Naive thymus-derived CD8-positive, alpha-beta T cell (primary cell): ENCODE measurements at regions of chr19 and their contacts with region 1.

Region 1: GRCh38 chr19:8569066-8569771 is 8.0 kb downstream of the MYO1F start:
- DNase-seq: peak in 7 of 10 donors; percentile 27 to 82 (median 50)
- ATAC-seq: peak; percentile 69 to 82
- H3K4me3 Mint-ChIP-seq: peak overlapping the region; percentile 63 to 89 (median 80)
- H3K27ac Mint-ChIP-seq: peak overlapping the region; percentile 84 to 99 (median 92)
- H3K4me1 Mint-ChIP-seq: peaks cover 28 to 89% (median 68%) of the 10 kb centered on the region in 4 donors
- H3K27me3 Mint-ChIP-seq: no peaks in the 10 kb centered on the region

Region 2: DNA sequence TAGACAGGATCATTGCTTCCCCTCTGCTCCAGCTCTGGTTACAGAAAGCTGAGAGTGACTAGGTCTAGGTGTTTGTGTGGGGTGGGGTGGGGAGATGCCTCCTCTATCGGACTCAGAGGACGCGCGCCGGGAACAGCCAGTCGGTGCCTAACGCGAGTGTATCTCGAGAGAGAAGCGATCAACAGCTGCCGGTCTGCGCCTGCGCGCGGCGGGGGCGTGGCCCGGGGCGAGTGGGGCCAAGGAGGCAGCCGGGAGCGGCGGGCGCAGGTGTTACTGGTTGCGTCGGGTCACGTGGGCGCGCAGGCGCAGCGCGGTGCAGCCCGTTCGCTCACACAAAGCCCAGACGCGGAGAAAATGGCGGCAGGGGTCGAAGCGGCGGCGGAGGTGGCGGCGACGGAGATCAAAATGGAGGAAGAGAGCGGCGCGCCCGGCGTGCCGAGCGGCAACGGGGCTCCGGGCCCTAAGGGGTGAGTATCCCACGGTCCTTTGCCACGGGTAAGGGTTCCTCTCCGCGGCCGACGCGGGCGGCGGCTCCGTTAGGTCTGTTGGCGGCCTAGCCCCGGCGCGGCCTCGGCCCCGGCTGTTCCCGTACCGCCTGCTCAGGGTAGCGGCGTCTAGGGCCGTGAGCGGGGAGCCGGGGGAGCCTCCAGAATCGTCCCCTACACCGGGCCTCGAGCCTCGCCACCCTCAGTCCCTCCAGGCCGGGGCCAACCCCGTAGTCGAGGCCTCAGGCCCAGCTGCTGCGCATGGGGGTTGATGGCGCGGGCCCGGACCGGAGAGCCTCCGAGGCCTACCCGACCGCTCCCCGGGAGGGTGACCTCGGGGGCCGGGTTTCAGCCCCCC is 124.4 kb before region 1 on chr19 and contains the start of gene HNRNPM:
- POLR2A ChIA-PET with region 1: interaction called, 10 read pairs
- DNase-seq: peak; percentile 97 to 100 (median 100)
- ATAC-seq: peak; percentile 88 to 91
- H3K4me3 Mint-ChIP-seq: peak within 1 kb of the TSS; percentile 89 to 99 (median 97)
- H3K27ac Mint-ChIP-seq: peak within 1 kb of the TSS; percentile 94 to 99 (median 98)
- H3K4me1 Mint-ChIP-seq: peaks cover 19 to 48% (median 41%) of the 10 kb centered on the region in 4 donors
- H3K27me3 Mint-ChIP-seq: no peaks in the 10 kb centered on the region
- polyA plus RNA-seq, gene HNRNPM: 214 to 304 (median 217) TPM

Region 3: GRCh38 chr19:8487137-8487851 is 81.9 kb before region 1 on chr19:
- POLR2A ChIA-PET with region 1: interaction called, 20 read pairs
- DNase-seq: peak in 9 of 10 donors; percentile 49 to 85 (median 70)
- ATAC-seq: peak; percentile 90 to 91
- H3K4me3 Mint-ChIP-seq: peak overlapping the region; percentile 48 to 86 (median 78)
- H3K27ac Mint-ChIP-seq: peak overlapping the region; percentile 79 to 94 (median 92)
- H3K4me1 Mint-ChIP-seq: peaks cover 34 to 56% (median 45%) of the 10 kb centered on the region in 4 donors
- H3K27me3 Mint-ChIP-seq: no peaks in the 10 kb centered on the region

Region 4: GRCh38 chr19:8526345-8527067 is 42.7 kb before region 1 on chr19:
- POLR2A ChIA-PET with region 1: interaction called, 802 read pairs
- DNase-seq: no peak
- ATAC-seq: peak in 1 of 2 donors; percentile 30
- H3K4me3 Mint-ChIP-seq: peak overlapping the region in 1 of 10 donors; percentile 57
- H3K27ac Mint-ChIP-seq: peak overlapping the region in 6 of 10 donors; percentile 28 to 88 (median 74)
- H3K4me1 Mint-ChIP-seq: peaks cover 5 to 24% (median 13%) of the 10 kb centered on the region in 4 donors
- H3K27me3 Mint-ChIP-seq: no peaks in the 10 kb centered on the region

Region 5: DNA sequence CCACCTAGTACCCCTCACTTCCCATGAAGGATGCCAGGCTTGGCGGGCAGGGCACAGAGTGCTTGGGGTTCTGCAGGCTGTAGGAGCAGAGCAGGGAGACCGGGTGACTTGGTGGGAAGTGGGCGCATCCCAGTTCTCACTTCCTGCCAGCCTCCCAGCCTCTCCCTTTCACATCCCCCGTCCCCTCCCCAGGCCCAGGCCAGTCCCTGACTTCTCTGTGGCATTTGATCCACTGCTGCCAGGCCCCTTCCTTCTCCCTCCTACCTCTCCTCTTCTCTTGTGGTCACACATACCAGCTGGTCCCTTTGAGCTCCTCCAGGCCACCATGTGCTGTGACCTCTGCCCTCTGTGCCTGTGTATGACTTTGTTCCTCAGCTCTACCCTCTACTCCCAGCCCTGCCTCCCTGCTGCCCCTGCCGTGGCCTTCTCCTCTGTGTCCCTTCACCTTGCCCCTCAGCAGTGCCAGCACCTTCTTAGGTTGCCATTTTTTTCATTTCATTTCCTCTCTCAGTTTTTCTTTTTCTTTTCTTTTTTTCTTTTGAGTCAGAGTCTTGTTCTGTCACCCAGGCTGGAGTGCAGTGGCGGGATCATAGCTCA is 11.5 kb before region 1 on chr19:
- POLR2A ChIA-PET with region 1: interaction called, 12 read pairs
- DNase-seq: no peak
- ATAC-seq: no peak
- H3K4me3 Mint-ChIP-seq: no peak overlapping the region
- H3K27ac Mint-ChIP-seq: peak overlapping the region; percentile 29 to 87 (median 81)
- H3K4me1 Mint-ChIP-seq: peaks cover 17 to 41% (median 33%) of the 10 kb centered on the region in 4 donors
- H3K27me3 Mint-ChIP-seq: no peaks in the 10 kb centered on the region

Region 6: DNA sequence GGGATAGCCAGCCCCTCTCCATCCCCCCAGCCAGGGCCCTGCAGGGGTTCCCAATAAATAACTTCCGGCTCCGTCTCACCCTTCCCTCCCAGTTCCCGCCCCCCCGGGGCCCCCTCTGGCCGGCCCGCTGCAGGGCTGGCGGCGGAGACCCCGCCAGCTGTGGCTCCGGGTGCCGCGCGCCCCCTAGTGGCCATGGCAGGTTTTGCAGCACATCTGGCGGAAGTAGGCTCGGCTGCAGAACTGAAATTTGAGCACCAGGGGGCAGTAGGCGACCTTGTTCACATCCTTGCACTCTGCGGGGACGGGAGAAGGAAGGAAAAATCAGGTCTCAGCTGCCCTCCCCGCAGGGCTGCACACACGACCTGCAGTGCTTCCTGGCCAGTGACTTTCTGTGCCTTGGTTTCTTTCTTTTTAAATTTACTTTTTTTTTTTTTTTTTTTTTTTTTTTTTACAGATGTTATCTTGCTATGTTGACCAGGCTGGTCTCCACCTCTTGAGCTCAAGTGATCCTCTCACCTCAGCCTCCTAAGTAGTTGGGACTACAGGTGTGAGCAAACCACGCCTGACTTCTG is 11.6 kb after region 1 on chr19:
- POLR2A ChIA-PET with region 1: interaction called, 68 read pairs
- DNase-seq: peak; percentile 74 to 92 (median 86)
- ATAC-seq: peak; percentile 53 to 70
- H3K4me3 Mint-ChIP-seq: no peak overlapping the region
- H3K27ac Mint-ChIP-seq: peak overlapping the region in 2 of 10 donors; percentile 68 to 69
- H3K4me1 Mint-ChIP-seq: peaks cover 18 to 49% (median 41%) of the 10 kb centered on the region in 4 donors
- H3K27me3 Mint-ChIP-seq: no peaks in the 10 kb centered on the region

Region 7: DNA sequence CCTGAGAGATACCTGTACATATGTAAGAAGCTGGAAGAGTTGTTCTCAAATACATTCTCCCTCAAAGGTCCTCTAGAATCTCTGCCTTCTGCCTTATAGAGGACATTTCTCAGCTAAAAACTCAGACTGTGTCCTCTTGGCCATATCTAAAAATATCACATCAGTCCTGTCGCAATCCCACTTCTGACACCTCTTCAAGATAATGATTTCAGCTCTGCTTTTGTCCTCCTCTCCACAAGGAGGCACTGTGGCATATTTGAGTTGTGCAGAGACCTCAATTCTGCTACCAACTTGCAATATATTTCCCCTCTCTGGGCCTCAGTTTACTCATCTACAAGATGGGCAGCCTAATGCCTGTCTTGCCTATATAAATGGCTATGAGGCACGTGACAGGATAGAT is 24.7 kb after region 1 on chr19:
- POLR2A ChIA-PET with region 1: no interaction called
- DNase-seq: no peak
- ATAC-seq: no peak
- H3K4me3 Mint-ChIP-seq: peak overlapping the region in 6 of 10 donors; percentile 14 to 73 (median 54)
- H3K27ac Mint-ChIP-seq: peak overlapping the region in 5 of 10 donors; percentile 25 to 82 (median 74)
- H3K4me1 Mint-ChIP-seq: peaks cover 18 to 42% (median 32%) of the 10 kb centered on the region in 4 donors
- H3K27me3 Mint-ChIP-seq: no peaks in the 10 kb centered on the region